Breast epithelium (tissue), 4 donors: ENCODE measurements at regions of chr10 and their contacts with region 1.

Region 1: DNA sequence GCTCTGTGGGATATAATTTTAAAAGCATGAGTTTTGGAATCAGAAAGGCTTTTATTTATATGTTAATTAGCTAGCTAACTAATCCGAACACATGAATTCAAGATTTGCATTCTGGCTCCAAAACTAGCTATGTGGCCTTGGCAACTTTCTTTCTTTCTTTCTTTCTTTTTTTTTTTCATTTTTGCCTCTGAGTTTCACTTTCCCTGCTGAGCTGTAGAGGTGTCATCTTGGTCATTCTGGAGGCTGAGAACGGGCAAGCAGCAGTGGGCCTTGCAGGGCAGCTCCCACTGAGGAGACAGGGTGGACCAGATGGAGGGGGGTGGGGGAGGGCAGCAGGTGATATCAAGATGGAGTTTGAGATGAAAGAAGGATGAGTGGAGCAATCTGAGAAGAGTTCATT is 24.8 kb upstream of the SFMBT2 start:
- DNase-seq: no peak
- H3K4me3 ChIP-seq: no peak overlapping the region
- H3K27ac ChIP-seq: no peak overlapping the region
- H3K4me1 ChIP-seq: no peaks in the 10 kb centered on the region
- H3K27me3 ChIP-seq: peaks cover 0 to 29% of the 10 kb centered on the region in 2 donors
- CTCF ChIP-seq: no peak
- POLR2A ChIP-seq: no peak

Region 2: DNA sequence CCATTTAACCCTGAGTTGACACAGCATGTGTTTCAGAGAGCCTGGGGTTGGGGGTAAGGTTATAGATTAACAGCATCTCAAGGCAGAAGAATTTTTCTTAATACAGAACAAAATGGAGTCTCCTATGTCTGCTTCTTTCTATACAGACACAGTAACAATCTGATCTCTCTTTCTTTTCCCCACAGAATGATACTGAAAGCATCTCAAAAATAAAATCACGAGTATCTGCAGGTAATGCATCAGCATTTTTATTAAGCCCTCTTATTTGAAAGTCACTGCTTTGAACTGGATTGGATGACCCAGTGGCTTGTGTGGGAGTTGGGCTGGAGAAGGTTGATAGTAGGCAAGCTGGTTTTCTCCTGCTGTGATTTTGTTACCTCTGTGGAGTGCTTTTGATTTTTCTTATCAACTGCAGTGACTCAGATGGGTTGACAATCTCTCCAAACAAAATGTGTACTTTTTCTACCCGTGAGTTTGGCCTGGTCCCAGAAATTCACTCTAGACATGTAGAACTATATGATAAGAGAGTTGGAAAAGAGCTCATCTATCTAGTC is 602.1 kb before region 1 on chr10:
- intact Hi-C with region 1: loop called (anchors 5 kb)
- DNase-seq: no peak
- H3K4me3 ChIP-seq: no peak overlapping the region
- H3K27ac ChIP-seq: no peak overlapping the region
- H3K4me1 ChIP-seq: no peaks in the 10 kb centered on the region
- H3K27me3 ChIP-seq: no peaks in the 10 kb centered on the region
- CTCF ChIP-seq: no peak
- POLR2A ChIP-seq: no peak

Region 3: GRCh38 chr10:7397049-7398035 is 38.3 kb before region 1 on chr10:
- intact Hi-C with region 1: no loop called
- DNase-seq: no peak
- H3K4me3 ChIP-seq: no peak overlapping the region
- H3K27ac ChIP-seq: no peak overlapping the region
- H3K4me1 ChIP-seq: no peaks in the 10 kb centered on the region
- H3K27me3 ChIP-seq: no peaks in the 10 kb centered on the region
- CTCF ChIP-seq: no peak
- POLR2A ChIP-seq: no peak

Region 4: DNA sequence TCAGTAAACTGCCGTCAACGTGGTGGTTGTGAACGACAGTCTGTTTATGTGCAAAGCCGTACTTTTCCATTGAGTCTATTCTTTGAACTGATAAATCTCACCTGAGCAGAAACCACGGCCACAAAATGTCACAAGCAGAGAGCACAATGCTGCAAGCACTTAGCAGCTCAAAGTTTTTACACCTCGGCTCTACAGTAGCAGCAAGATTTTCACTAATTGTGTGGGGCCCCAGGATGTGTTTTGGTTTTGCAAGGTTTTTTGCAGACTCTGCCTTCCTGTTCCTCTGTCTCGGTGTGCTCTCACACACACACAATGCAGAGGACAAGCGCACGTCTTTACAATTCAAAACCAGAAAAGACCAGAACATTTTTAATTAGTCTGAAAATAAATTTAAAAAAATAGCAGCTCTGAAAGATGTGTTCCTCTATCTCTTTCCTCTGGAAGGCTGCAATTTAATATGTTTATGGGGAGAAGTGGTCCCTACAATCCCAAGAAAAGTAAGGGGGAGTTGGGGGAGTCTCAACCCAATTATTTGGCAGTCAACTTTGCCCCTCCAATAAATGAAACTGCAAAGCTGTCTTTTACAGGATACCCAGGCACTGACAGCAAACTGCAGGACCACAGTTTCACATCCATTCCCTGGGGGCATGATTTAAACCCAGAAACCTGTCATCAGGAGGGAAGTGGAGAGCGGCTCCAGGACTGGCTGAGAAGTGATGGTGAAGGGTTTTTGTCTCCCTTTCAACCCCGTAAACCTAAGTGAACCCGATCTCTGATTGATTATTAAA is 49.0 kb after region 1 on chr10:
- intact Hi-C with region 1: no loop called
- DNase-seq: peak in 1 of 2 donors; percentile 20
- H3K4me3 ChIP-seq: no peak overlapping the region
- H3K27ac ChIP-seq: no peak overlapping the region
- H3K4me1 ChIP-seq: no peaks in the 10 kb centered on the region
- H3K27me3 ChIP-seq: no peaks in the 10 kb centered on the region
- CTCF ChIP-seq: no peak
- POLR2A ChIP-seq: no peak

Region 5: GRCh38 chr10:7756360-7756992 is 320.8 kb after region 1 on chr10:
- intact Hi-C with region 1: no loop called
- DNase-seq: no peak
- H3K4me3 ChIP-seq: no peak overlapping the region
- H3K27ac ChIP-seq: no peak overlapping the region
- H3K4me1 ChIP-seq: no peaks in the 10 kb centered on the region
- H3K27me3 ChIP-seq: no peaks in the 10 kb centered on the region
- CTCF ChIP-seq: no peak
- POLR2A ChIP-seq: no peak